Sciatic nerve (tissue), 2 donors: ENCODE measurements at regions of chr17 and their contacts with region 1.

Region 1: DNA sequence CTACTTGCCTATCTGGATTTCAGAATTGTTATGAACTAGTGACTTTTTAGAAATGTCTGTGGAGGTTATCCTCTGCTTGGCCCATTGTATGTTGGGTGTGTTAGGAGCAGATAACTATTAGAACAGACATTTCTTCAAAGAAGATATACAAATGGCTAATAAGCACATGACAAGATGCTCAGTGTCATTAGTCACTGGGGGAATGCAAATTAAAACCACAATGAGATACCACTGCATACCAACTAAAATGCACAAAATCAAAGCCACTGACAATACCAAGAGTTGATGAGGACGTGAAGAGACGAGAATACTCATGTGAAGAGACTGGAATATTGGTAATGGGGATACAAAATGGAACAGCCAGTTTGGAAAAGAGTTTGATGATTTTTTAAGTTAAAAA is 39.2 kb downstream of the CEP112 start:
- DNase-seq: no peak
- ATAC-seq: no peak

Region 2: DNA sequence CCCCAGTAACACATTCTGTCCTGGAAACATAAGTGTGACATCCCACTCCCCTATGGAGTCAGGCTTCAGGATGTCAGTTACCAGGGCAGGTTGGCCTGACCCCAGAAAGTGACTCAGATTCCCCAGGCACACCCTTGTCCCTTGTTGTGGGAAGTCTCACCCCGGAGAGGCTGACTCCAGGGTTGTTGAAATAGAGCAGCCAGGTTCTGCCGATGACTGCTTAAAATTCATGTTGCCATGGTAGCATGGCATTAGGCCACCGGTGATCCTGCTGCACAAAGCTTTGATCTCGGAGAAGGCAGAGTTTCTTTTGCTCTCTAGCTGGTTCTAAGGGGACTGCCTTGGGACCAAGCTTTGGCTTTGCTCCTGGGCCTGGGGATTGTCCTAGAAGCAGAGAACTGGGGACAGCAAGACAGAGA is 908.9 kb before region 1 on chr17:
- intact Hi-C with region 1: loop called (anchors 5 kb)
- DNase-seq: no peak
- ATAC-seq: no peak